A549 (cell line): ENCODE measurements at regions of chr6 and their contacts with region 1.

Region 1: DNA sequence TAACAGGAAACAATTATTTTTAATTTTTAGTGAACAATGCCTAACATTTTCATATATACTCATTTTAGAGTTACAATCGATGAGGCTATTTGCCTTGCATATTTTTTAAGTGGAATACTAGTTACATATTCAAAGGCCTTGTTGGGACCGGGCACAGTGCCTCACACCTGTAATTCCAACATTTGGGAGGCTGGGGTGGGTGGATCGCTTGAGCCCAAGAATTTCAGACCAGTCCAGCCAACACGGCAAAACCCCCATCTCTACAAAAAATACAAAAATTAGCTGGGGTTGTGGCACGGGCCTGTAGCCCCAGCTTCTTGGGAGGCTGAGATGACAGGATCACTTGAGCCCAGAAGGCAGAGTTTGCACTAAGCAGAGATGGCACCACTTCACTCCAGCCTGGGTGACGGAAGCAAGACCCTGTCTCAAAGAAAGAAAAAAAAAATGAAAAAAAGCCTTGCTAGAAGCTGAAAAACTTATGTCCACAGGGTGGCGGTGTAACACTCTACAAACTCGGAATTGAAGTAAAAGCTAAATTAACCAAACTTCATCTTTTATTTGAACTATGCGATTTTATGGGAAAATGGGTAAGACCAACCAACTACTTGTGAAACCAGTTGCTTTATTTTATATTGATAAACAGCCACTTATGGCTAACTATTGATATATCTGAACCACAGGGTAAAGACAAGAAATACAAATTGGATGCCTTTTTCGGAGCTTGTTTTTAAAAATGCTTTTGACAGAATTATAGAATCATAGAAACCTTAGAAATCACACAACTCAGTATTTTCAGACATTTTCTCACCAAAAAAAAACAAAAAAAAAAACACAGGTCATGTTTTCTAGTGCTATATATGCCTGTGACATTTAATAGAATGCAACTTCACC is 24.1 kb upstream of the ROS1 start:
- DNase-seq: peak in 1 of 2 experiments; percentile 77
- ATAC-seq: peak; percentile 36 to 54; a peak in 3 of 6 replicates
- H3K4me3 ChIP-seq: peak overlapping the region; percentile 25; the same call in 1 of the 3 replicates
- H3K27ac ChIP-seq: peak overlapping the region; percentile 96 to 100
- H3K4me1 ChIP-seq: peaks cover 52% of the 10 kb centered on the region
- CTCF ChIP-seq: peak; percentile 76
- EP300 ChIP-seq: no peak
- POLR2A ChIP-seq: no peak
- RAD21 ChIP-seq: peak; percentile 88

Region 2: DNA sequence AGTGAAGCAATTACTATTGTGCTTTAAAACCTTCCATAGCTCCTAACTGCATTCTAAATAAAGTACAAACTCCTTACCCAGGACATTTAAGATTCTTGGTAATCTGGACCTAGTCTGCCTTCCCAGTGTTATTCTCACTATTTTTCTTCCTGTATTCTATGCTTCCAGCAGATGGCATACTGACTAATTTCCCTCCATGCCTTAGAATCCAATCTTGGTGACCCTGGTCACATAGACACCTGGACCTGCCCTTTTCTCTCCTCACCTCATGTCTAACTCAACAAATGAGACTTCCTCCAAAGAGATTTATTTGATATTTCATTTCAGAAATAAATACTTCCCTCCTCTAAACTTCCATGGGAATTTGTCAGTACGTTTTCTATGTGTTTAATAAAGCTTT is 49.9 kb before region 1 on chr6:
- CTCF ChIA-PET with region 1: interaction called, 10 read pairs
- POLR2A ChIA-PET with region 1: no interaction called
- DNase-seq: peak; percentile 10 to 22
- ATAC-seq: peak; percentile 73 to 81; a peak in 3 of 6 replicates
- H3K4me3 ChIP-seq: no peak overlapping the region
- H3K27ac ChIP-seq: peak overlapping the region; percentile 31 to 70; a peak in 3 of 6 replicates
- H3K4me1 ChIP-seq: peaks cover 12% of the 10 kb centered on the region
- CTCF ChIP-seq: peak; percentile 26; the same call in 2 of the 3 replicates
- EP300 ChIP-seq: no peak
- POLR2A ChIP-seq: no peak
- RAD21 ChIP-seq: peak; percentile 20 to 37; a peak in 2 of 5 replicates

Region 3: DNA sequence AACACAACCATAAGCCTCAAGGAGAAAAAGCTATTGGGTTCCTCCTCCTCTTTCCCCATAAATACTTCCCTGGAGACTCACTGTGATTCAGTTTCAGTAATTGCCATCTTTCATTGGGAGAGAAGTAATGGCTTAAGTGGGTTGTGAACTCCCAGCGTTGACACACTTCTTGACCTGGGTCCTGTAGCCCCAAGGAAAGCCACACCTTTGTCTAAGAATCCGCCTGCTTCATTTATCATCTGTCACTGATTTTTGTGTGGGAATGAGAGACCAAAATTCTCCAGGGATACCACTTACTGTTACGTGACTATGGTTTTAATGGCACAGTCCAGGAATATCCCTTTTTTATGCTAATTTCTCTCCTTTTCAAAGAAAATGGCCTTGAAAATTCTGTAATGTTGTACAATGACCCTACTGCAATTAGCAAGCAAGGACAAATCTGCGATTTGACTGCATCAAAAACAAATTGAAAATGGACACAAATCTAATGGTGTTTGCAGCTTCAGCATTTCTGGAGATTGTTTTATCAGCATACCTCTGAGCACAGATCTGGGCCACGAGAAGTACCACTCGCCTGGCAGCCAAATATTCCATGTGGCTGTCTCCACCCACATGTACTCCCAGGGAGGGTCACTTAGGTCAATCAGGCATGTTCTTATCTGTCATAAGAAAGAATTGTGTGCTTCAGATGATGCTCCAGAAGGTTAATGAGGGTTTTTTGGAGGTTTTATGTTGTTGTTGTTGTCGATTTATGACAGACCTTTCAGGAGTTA is 62.4 kb after region 1 on chr6:
- CTCF ChIA-PET with region 1: interaction called, 11 read pairs
- POLR2A ChIA-PET with region 1: no interaction called
- DNase-seq: peak in 1 of 2 experiments; percentile 34
- ATAC-seq: peak in 1 of 2 experiments; percentile 7; a peak in 1 of 6 replicates
- H3K4me3 ChIP-seq: no peak overlapping the region
- H3K27ac ChIP-seq: peak overlapping the region; percentile 88 to 95
- H3K4me1 ChIP-seq: peaks cover 99% of the 10 kb centered on the region
- CTCF ChIP-seq: no peak
- EP300 ChIP-seq: no peak
- POLR2A ChIP-seq: no peak
- RAD21 ChIP-seq: no peak

Region 4: DNA sequence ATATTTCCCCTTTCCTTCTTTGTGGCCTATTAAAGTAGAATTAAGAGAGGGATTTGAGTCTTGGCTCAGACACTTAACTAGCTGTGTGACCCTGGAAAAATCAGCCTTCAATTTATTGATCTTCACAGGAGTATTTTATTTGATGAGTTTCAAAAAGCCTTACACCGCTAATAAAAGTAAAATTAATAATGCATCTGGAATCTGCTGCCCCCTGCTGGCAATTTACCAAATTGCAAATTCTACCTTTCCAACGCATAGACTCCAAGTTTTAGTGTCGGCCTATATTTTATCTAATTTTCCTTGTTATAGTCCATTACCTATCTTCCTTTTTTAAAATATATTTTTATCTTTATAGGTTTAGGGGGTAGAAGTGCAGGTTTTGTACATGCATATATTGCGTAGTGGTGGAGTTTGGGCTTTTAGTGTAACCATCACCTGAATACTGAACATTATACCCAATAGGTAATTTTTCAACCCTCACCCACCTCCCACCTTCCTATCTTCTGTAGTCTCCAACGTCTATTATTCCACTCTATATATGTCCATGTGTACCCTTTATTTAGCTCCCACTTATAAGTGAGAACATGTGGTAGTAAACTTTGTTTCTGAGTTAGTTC is 106.2 kb after region 1 on chr6:
- CTCF ChIA-PET with region 1: interaction called, 23 read pairs
- POLR2A ChIA-PET with region 1: interaction called, 3 read pairs
- DNase-seq: no peak
- ATAC-seq: peak in 1 of 2 experiments; percentile 37; a peak in 2 of 6 replicates
- H3K4me3 ChIP-seq: no peak overlapping the region
- H3K27ac ChIP-seq: peak overlapping the region; percentile 74 to 88
- H3K4me1 ChIP-seq: peaks cover 29% of the 10 kb centered on the region
- CTCF ChIP-seq: peak; percentile 84
- EP300 ChIP-seq: no peak
- POLR2A ChIP-seq: no peak
- RAD21 ChIP-seq: peak; percentile 77 to 83